Esophagus squamous epithelium (tissue), 5 donors: ENCODE measurements at regions of chr4 and their contacts with region 1.

Region 1: DNA sequence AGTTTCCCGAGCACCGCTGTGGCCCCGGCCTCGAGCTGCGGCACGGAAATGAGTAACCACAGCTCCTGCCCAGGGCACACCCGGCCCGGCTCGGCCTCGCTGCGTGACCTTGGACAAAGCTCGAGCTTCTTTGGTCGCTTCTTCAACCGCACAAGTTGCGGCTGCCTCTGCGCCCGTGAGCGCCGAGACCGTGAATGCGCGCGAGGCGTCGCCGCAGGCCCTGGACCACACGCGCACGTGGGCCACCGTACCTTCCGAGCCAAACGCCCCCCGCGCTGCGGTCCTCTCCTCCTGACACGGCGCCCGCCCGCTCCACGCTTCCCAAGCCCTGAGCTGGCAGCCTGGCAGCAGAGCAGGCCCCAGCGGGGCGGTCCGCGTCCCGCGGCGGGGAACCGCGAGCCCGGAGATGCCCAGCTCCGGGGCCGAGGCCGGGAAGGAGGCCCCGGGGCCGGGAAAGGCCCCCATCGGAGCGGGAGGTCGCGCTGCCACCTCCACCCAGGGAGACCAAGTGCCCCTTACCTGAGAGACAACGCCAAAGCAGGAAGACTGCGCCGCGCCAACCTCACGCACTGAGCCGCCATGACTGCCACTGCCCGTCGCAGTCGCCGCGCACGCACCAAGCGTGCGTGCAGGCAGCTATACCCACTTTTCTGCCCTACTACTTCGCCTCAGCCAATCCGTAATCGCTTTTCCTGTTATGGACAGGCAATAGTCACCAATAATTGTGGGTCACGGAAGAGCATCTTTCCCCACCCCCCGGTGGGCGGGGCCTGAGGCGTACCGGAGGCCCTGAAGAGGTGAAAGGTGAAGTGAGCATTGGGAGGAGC is at the start of gene GRPEL1:
- DNase-seq: peak; percentile 96
- H3K4me3 ChIP-seq: peak within 1 kb of the TSS; percentile 74 to 95 (median 94)
- H3K27ac ChIP-seq: peak within 1 kb of the TSS; percentile 93 to 97 (median 95)
- H3K4me1 ChIP-seq: peaks cover 12 to 47% (median 28%) of the 10 kb centered on the region in 3 donors
- H3K27me3 ChIP-seq: no peaks in the 10 kb centered on the region
- CTCF ChIP-seq: peak in 1 of 6 experiments; percentile 5
- POLR2A ChIP-seq: peak in 3 of 4 donors; percentile 90 to 98 (median 97)
- total RNA-seq, gene GRPEL1: 16.6 to 30.6 (median 20.7) TPM

Region 2: GRCh38 chr4:6909073-6909965 is 158.3 kb before region 1 on chr4 and contains the start of gene TBC1D14:
- intact Hi-C with region 1: loop called (anchors 5 kb)
- DNase-seq: peak; percentile 39
- H3K4me3 ChIP-seq: peak within 1 kb of the TSS; percentile 74 to 93 (median 86)
- H3K27ac ChIP-seq: peak within 1 kb of the TSS; percentile 97 to 99 (median 98)
- H3K4me1 ChIP-seq: peaks cover 16 to 59% (median 19%) of the 10 kb centered on the region in 3 donors
- H3K27me3 ChIP-seq: peaks cover 0 to 10% (median 0%) of the 10 kb centered on the region in 4 donors
- CTCF ChIP-seq: peak in 4 of 6 experiments; percentile 18 to 53 (median 37)
- POLR2A ChIP-seq: peak in 2 of 4 donors; percentile 28 to 61
- total RNA-seq, gene TBC1D14: 28.2 to 50.4 (median 42.1) TPM

Region 3: DNA sequence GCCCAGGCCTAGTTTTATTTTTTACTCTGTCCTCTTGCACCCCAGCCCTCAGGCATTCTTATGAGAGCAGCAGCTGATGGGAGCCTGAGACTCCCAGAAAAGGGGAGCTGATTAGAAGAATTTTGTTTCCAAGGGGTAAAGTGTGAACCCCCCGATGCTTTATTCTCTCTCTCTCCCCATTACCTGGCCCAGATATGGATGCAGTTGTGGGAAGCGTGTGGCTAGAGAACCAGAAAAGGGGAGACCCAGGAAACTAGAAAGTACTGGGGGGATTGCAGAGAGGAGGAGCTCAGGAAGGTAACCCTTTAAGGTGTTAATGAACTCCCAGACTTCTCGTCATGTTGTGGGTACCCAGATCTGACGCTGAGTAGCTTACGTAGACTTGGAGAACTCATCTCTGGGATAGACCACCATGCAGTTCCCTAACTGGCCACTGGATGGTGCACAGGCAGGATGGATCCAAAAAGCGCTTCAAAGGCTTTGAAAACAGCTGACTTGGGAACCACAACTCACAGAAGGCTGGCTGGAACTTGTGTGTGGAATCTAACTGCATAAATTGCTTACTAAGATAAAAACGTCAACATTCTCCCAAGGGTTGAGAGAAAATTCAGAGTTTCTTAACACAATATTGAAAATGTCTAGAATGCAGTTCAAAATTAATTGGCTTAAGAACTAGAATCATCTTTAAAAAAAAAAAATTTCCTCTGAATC is 93.4 kb before region 1 on chr4:
- intact Hi-C with region 1: loop called (anchors 5 kb)
- DNase-seq: no peak
- H3K4me3 ChIP-seq: no peak overlapping the region
- H3K27ac ChIP-seq: no peak overlapping the region
- H3K4me1 ChIP-seq: peaks cover 0 to 15% (median 9%) of the 10 kb centered on the region in 3 donors
- H3K27me3 ChIP-seq: no peaks in the 10 kb centered on the region
- CTCF ChIP-seq: peak; percentile 97 to 98 (median 98)
- POLR2A ChIP-seq: no peak

Region 4: DNA sequence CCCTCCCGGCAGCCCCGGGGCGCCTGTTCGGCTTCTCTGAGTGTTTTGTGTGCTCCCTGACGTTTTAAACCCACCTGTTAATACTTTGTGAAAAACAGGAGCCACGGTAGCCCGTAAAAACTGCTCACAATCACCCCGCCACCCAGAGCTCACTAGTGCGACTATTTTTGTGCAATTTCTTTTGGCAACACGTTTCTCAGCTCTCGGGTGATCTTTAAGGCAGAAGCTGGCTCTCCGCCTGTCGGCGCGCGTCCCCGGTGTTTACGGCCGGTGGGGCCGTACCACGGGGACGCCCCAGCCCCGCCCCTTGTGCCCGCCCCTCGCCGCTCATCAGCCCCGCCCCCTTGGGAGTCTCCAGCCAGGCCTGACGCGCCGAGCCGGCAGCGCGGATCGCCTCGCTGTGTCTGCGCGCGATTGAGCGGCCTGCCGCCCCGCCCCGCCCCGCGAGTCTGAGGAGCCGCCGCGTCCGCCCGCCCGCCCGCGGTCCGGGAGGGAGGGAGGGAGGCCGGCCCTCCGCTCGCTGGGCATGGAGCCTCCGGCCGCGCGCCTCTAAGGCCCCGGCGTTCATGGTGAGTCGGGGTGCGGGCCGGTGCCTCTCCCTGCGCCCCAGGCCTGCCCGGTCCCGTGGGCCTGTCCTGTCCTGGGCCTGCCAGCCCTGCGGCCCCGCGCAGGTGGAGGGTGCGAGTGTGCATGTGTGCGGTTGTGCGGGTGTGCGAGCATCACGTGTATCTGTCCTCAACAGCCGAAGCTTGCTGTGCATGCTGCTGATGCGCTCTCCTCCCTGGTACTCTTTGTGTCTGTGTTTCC is 80.7 kb before region 1 on chr4:
- intact Hi-C with region 1: loop called (anchors 5 kb)
- DNase-seq: peak; percentile 53
- H3K4me3 ChIP-seq: peak overlapping the region; percentile 61 to 89 (median 80)
- H3K27ac ChIP-seq: peak overlapping the region; percentile 93 to 97 (median 95)
- H3K4me1 ChIP-seq: peaks cover 42 to 89% (median 48%) of the 10 kb centered on the region in 3 donors
- H3K27me3 ChIP-seq: no peaks in the 10 kb centered on the region
- CTCF ChIP-seq: peak in 3 of 6 experiments; percentile 3 to 13 (median 8)
- POLR2A ChIP-seq: peak in 3 of 4 donors; percentile 21 to 73 (median 62)